GM10248 (cell line): ENCODE measurements at regions of chr10 and their contacts with region 1.

Region 1: GRCh38 chr10:98028168-98028770 is 2.2 kb downstream of the CRTAC1 start:
- DNase-seq: peak; percentile 85
- CTCF ChIP-seq: peak; percentile 66

Region 2: DNA sequence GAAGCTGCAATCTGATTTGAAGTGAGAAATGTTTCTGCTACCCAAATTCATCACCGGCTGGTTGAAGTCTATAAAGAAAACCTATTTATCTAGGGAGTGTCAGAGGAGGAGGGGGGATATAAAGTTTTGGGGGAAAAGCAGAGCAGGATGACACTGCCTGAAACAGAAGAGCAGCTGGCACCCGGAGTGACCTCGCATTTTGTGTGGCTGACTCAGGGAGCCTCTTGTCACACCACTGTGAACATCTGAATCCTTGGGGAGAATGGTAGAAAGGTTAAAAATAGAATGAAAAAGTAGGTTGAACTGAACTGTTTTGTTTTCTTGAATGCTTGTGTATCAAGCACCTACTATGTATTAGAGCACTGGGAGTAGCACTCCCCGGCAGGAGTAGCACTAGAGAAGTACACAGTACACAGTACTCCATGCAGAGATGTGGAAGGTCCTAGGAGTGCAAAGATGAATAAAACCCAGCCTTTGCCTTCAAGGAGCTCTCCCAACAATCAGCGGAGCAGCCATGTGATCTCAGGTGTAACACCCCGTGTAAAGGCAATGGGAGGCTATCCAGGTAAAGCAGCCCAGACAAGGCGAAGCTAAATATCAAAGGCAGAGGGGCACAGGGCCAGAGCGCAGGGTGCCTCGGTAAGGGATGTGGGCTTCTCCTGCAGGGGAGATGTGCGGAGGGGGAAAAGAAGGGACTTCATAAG is 11.3 kb before region 1 on chr10:
- CTCF ChIA-PET with region 1: interaction called, 13 read pairs
- POLR2A ChIA-PET with region 1: no interaction called
- DNase-seq: no peak
- CTCF ChIP-seq: no peak

Region 3: GRCh38 chr10:98125940-98126631 is 97.8 kb after region 1 on chr10:
- CTCF ChIA-PET with region 1: no interaction called
- POLR2A ChIA-PET with region 1: no interaction called
- DNase-seq: no peak
- CTCF ChIP-seq: no peak